Colonic mucosa (tissue), 4 donors: ENCODE measurements at regions of chr19 and their contacts with region 1.

Region 1: DNA sequence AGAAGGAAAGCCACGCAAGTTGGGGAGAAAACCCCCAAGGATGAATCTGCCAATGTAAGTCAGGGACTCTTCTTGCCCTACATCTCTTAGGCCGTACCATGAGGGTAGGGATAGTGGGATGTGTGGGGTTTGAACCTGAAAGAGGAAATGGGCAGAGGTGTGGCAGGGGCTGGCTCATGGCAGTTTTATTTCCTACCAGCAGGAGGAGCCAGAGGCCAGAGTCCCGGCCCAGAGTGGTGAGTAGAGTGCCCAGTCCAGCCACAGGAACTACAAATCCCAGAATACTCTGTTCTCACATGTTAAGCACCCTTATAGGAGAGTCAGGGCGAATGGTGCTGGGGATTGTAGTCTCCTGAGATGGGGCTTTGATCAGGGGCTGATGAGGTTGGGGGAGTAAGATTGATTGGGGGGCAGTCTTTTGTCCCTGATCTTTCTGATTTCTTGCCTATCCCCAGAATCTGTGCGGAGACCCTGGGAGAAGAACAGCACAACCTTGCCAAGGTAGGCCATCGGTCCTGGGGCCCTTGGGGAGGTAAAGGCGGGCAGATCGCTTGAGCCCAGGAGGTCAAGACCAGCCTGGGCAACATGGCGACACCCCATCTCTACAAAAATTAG is 16.5 kb downstream of the VASP start:
- DNase-seq: peak; percentile 81
- H3K4me3 ChIP-seq: no peak overlapping the region
- H3K27ac ChIP-seq: no peak overlapping the region
- H3K4me1 ChIP-seq: peaks cover 4% of the 10 kb centered on the region
- H3K27me3 ChIP-seq: no peaks in the 10 kb centered on the region
- CTCF ChIP-seq: peak; percentile 86

Region 2: GRCh38 chr19:45558399-45558878 is 34.7 kb after region 1 on chr19:
- intact Hi-C with region 1: loop called (anchors 5 kb)
- DNase-seq: peak; percentile 77
- H3K4me3 ChIP-seq: no peak overlapping the region
- H3K27ac ChIP-seq: no peak overlapping the region
- H3K4me1 ChIP-seq: peaks cover 3% of the 10 kb centered on the region
- H3K27me3 ChIP-seq: no peaks in the 10 kb centered on the region
- CTCF ChIP-seq: peak; percentile 63

Region 3: GRCh38 chr19:45569619-45570421 is 46.1 kb after region 1 on chr19:
- intact Hi-C with region 1: loop called (anchors 5 kb)
- DNase-seq: peak; percentile 80
- H3K4me3 ChIP-seq: no peak overlapping the region
- H3K27ac ChIP-seq: no peak overlapping the region
- H3K4me1 ChIP-seq: peaks cover 15% of the 10 kb centered on the region
- H3K27me3 ChIP-seq: no peaks in the 10 kb centered on the region
- CTCF ChIP-seq: peak; percentile 84

Region 4: DNA sequence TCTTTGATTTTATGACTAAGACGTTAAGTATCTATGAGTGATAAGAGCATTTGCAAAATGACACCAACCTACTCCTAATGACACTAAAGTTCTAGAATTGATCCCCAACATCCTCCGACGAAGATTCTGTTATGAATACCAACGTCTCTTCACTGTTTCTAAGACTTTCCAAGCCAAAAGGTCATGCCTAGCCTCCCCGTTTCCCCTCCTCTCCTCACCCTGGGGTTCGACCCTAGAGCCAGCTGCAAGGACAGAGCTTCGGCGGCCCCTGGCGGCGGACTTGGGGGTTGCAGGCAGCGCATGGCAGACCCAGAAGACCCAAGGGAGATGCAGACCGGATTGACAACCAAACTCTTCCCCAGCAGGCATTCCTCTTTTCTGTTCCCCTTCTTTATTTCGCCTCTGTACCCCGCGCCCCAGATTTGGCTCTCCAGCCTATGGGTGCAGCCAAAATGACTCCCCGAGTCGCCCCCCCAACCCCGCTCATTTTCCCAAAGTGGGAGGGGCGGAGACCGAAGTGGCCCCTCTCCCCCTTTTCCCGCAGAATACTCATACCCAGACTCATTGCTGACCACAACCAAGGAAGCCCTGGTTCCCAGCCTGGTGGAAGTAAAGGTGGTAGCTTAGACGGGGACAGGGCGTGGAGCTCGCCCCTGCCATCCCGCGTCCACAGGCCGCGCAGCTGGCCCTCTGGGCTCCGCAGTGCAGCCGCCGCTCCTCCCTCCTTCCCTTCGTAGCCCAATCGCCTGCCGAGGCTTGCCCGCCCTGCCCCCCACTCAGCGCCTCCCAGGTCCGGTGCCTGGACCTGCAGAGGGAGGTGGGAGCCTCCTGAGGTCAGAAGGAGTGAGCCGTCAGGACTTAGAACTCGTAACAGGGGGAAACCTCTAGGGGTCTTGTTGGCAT is 119.5 kb after region 1 on chr19:
- intact Hi-C with region 1: loop called (anchors 10 kb)
- DNase-seq: peak; percentile 94
- H3K4me3 ChIP-seq: no peak overlapping the region
- H3K27ac ChIP-seq: peak overlapping the region; percentile 67
- H3K4me1 ChIP-seq: peaks cover 8% of the 10 kb centered on the region
- H3K27me3 ChIP-seq: peaks cover 18% of the 10 kb centered on the region
- CTCF ChIP-seq: peak; percentile 98

Region 5: DNA sequence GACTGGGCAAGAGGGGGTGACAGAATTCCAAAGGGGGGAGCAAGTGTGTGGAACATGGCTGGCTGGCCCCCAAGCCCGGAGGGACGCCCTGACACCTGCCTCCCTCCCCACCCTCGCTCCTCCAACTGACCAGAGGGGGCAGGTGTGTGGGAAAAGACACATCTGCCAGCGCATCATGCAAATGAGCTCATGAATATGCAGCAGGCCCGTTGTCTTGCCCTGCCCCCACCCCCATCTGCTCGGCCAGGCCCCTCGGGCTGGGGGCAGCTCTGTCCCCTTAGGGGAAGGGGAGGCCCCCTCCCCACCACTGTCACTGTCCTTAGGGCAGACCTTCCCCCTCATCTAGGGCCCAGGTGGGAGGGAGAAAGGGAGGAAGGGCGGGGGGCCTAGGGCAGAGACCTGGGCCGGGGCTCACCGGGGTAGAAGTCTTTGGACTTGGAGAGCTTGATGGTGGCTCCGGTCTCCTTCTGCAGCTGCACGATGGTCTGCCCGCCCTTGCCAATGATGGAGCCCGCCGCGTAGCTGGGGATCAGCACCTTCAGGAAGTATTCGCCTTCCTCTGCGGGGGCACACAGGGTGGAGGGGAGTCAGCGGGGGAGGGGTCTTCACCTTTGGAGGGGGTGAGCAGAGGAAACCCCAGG is 437.0 kb after region 1 on chr19:
- intact Hi-C with region 1: no loop called
- DNase-seq: no peak
- H3K4me3 ChIP-seq: no peak overlapping the region
- H3K27ac ChIP-seq: no peak overlapping the region
- H3K4me1 ChIP-seq: no peaks in the 10 kb centered on the region
- H3K27me3 ChIP-seq: no peaks in the 10 kb centered on the region
- CTCF ChIP-seq: no peak